A549 (cell line): ENCODE measurements at regions of chr5 and their contacts with region 1.

Region 1: DNA sequence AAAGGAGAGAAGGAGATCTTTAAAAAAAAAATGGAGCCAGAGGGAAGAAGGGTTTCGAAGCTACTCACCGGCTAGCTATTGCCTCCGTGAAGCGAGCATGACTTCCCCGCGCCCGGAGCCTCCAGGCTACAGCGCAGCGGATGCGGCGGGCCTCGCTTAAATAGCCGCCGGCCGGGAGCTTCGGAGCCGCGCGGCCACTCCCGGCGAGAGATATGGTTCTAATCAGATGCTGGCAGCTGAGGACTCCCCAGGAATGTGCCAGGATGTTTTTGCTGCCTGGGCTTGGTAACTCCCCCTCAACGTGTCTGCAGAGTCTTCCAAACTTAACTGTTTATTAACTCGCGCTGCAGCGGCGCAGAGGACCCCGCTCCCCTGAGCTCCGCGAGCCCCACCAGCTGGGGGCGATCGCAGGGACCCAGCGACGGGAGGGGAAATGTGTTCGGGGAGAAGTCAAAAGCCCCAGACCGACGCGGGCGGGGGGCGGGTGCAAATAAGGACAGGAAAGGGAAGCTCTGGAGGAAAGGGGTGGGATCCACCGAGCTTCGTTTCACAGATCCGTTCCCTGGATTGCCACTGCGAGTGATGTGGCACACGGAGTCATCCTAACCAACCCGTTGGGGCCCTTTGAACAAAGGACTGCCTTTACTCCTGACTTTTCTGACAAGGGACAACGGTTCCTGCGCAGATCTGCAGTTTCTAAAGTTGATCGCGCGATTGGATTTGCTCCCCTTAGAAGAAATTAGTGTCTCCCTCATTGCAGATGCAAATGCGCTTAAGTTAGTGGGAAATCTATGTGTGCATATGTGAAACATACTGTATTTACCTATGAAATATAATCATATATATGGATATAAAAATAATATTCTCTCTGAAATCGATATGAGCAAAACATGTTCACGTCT is at the start of gene DAB2:
- DNase-seq: peak; percentile 87
- ATAC-seq: peak; percentile 92 to 93
- H3K4me3 ChIP-seq: peak within 1 kb of the TSS; percentile 54
- H3K27ac ChIP-seq: peak within 1 kb of the TSS; percentile 70 to 87
- H3K4me1 ChIP-seq: peaks cover 53% of the 10 kb centered on the region
- CTCF ChIP-seq: peak; percentile 67
- EP300 ChIP-seq: peak in 1 of 2 experiments; percentile 16; a peak in 1 of 5 replicates
- POLR2A ChIP-seq: peak; percentile 35; the same call in 1 of the 2 replicates
- RAD21 ChIP-seq: peak; percentile 48 to 73
- polyA plus RNA-seq, gene DAB2: 14.4 and 17.1 TPM in 2 replicates

Region 2: GRCh38 chr5:39074016-39074886 is 350.7 kb before region 1 on chr5 and contains the start of gene RICTOR:
- CTCF ChIA-PET with region 1: no interaction called
- POLR2A ChIA-PET with region 1: no interaction called
- DNase-seq: peak; percentile 79 to 94
- ATAC-seq: peak; percentile 83 to 90
- H3K4me3 ChIP-seq: peak within 1 kb of the TSS; percentile 90
- H3K27ac ChIP-seq: peak within 1 kb of the TSS; percentile 89 to 98
- H3K4me1 ChIP-seq: peaks cover 51% of the 10 kb centered on the region
- CTCF ChIP-seq: no peak
- EP300 ChIP-seq: peak in 1 of 2 experiments; percentile 16; a peak in 1 of 5 replicates
- POLR2A ChIP-seq: peak; percentile 87
- RAD21 ChIP-seq: peak; percentile 11 to 26; a peak in 2 of 5 replicates
- polyA plus RNA-seq, gene RICTOR: 26.8 and 28.5 TPM in 2 replicates

Region 3: DNA sequence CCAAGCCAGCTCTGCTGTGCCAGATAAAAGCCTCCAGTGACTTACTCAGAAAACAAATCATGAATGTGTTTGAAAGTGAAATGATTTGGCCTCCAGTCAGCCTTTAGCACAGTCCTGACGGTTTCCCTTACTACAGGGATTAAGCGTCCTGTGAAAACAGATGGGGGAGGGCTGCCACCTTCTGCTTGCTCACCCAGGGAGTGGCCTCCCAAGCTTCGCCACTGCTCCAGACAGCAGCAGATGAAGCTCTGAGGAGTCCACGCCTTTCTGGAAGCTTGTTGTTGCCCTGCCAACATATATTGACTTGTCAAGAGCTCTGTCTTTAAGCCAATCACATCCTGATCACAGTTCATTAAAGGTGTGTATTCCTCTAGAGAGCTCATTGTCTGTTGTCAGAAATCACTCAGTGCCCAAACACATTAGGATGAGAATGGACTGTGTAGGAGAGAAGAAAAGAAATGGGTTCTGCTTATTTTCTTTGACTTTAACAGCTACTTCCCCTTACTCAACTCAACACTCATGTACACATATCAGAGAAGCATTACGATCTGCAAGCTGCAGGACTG is 200.7 kb before region 1 on chr5:
- CTCF ChIA-PET with region 1: no interaction called
- POLR2A ChIA-PET with region 1: interaction called, 11 read pairs
- DNase-seq: peak in 1 of 2 experiments; percentile 58
- ATAC-seq: peak; percentile 78 to 84; a peak in 5 of 6 replicates
- H3K4me3 ChIP-seq: no peak overlapping the region
- H3K27ac ChIP-seq: peak overlapping the region in 1 of 2 experiments; percentile 49; a peak in 3 of 6 replicates
- H3K4me1 ChIP-seq: peaks cover 16% of the 10 kb centered on the region
- CTCF ChIP-seq: no peak
- EP300 ChIP-seq: no peak
- POLR2A ChIP-seq: no peak
- RAD21 ChIP-seq: no peak

Region 4: DNA sequence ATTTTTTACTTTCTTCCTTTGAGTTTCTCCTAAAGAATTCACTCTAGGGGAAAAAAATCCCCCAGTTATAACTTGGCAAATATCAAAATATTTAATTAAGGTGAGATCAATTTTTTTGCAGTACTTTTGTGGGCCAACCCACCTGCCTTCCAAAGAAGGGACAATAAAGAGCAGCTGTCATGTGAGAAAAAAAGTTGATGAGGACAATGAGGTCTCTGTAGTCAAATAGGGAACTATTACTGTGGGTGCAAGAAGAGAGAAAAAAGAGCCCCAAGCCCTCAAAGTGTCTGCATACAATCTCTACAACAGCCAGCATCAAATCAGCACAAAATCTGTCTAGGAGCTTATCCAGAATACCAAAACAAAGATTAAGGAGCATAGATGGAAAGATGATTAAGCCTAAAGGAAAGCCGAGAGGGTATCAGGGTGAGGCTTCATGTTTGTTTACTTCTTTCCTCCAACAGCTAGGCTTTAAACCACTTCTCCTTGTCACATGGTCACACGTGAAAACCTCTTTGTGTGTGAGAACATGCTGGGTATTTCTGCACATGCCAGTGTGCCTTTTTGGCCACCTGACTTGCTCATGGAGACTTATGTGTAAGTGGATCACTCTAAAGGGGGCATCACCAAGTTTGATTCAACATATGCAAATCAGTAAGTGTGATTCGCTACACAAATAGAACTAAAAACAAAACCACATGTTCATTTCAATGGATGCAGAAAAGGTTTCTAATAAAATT is 186.5 kb before region 1 on chr5:
- CTCF ChIA-PET with region 1: no interaction called
- POLR2A ChIA-PET with region 1: no interaction called
- DNase-seq: no peak
- ATAC-seq: no peak
- H3K4me3 ChIP-seq: no peak overlapping the region
- H3K27ac ChIP-seq: no peak overlapping the region
- H3K4me1 ChIP-seq: no peaks in the 10 kb centered on the region
- CTCF ChIP-seq: no peak
- EP300 ChIP-seq: no peak
- POLR2A ChIP-seq: no peak
- RAD21 ChIP-seq: no peak

Region 5: DNA sequence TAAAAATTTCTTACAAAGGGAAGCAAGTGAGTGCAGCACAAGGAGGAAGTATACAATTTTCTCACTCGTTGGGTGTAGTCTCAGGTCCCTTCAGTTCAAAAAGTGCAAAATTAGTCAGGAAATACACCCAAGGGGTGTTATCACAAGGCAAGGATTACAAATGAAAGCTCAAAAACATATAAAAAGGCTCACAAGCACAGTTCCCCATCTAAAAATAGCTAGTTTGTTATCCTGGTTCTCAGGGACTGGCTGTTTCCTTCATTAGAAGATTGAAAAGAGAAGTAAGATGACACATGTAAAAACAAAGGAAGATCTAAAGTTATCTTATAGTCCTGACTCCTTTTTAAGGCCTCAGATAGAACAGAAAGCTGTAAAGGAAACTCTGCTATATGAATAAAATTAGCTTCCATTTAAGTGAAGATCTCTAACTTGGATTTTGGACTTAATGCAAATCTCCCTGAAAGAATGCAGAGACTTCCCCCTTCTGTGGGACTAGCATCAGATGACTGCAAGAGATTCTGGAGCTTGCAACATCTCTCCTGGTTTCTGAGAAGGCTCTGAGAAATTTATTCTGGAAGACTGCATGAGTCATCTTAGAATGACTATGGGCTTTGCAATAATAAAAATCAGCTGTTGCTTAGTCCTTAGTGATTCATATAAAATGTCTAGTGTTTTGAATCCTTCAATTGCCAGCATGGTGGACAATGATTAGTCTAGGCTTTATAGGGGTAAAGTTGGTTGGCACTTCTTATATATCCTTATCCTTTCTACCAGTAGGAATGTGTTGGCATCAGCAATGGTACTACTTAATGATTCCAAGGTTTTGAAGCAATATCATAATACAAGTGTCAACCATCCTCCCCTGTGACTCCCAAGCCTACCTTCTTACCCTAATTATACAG is 25.6 kb before region 1 on chr5:
- CTCF ChIA-PET with region 1: interaction called, 17 read pairs
- POLR2A ChIA-PET with region 1: interaction called, 25 read pairs
- DNase-seq: peak; percentile 62 to 89
- ATAC-seq: peak; percentile 96 to 99
- H3K4me3 ChIP-seq: no peak overlapping the region
- H3K27ac ChIP-seq: peak overlapping the region; percentile 75 to 88
- H3K4me1 ChIP-seq: peaks cover 48% of the 10 kb centered on the region
- CTCF ChIP-seq: no peak
- EP300 ChIP-seq: peak; percentile 65; a peak in 2 of 5 replicates
- POLR2A ChIP-seq: no peak
- RAD21 ChIP-seq: peak in 1 of 2 experiments; percentile 50; a peak in 2 of 5 replicates

Region 6: GRCh38 chr5:39411051-39411450 is 13.9 kb before region 1 on chr5:
- CTCF ChIA-PET with region 1: interaction called, 33 read pairs
- POLR2A ChIA-PET with region 1: interaction called, 16 read pairs
- DNase-seq: peak in 1 of 2 experiments; percentile 26
- ATAC-seq: peak; percentile 56; a peak in 4 of 6 replicates
- H3K4me3 ChIP-seq: no peak overlapping the region
- H3K27ac ChIP-seq: peak overlapping the region in 1 of 2 experiments; percentile 40; a peak in 2 of 6 replicates
- H3K4me1 ChIP-seq: peaks cover 26% of the 10 kb centered on the region
- CTCF ChIP-seq: no peak
- EP300 ChIP-seq: no peak
- POLR2A ChIP-seq: no peak
- RAD21 ChIP-seq: no peak

Region 7: GRCh38 chr5:39452846-39453245 is 27.9 kb after region 1 on chr5:
- CTCF ChIA-PET with region 1: interaction called, 11 read pairs
- POLR2A ChIA-PET with region 1: interaction called, 4 read pairs
- DNase-seq: no peak
- ATAC-seq: no peak
- H3K4me3 ChIP-seq: no peak overlapping the region
- H3K27ac ChIP-seq: peak overlapping the region in 1 of 2 experiments; percentile 62; a peak in 2 of 6 replicates
- H3K4me1 ChIP-seq: peaks cover 32% of the 10 kb centered on the region
- CTCF ChIP-seq: no peak
- EP300 ChIP-seq: no peak
- POLR2A ChIP-seq: no peak
- RAD21 ChIP-seq: no peak

Region 8: GRCh38 chr5:39501397-39501796 is 76.4 kb after region 1 on chr5:
- CTCF ChIA-PET with region 1: interaction called, 9 read pairs
- POLR2A ChIA-PET with region 1: interaction called, 22 read pairs
- DNase-seq: peak in 1 of 2 experiments; percentile 32
- ATAC-seq: peak; percentile 62 to 71; a peak in 4 of 6 replicates
- H3K4me3 ChIP-seq: no peak overlapping the region
- H3K27ac ChIP-seq: peak overlapping the region; percentile 55 to 74
- H3K4me1 ChIP-seq: peaks cover 30% of the 10 kb centered on the region
- CTCF ChIP-seq: no peak
- EP300 ChIP-seq: no peak
- POLR2A ChIP-seq: no peak
- RAD21 ChIP-seq: no peak